ENCODE measurements at regions of chr3 and their contacts with region 1.

Region 1: GRCh38 chr3:33372218-33373081 is 67.8 kb downstream of the UBP1 start:
- DNase-seq: peak; percentile 12 to 42 (median 41)
- H3K4me3 ChIP-seq: peak overlapping the region in 1 of 3 experiments; percentile 13
- H3K4me3 Mint-ChIP-seq: peak overlapping the region in 1 of 2 donors; percentile 14
- H3K27ac ChIP-seq: no peak overlapping the region
- H3K27ac Mint-ChIP-seq: peak overlapping the region in 3 of 7 donors; percentile 28 to 48 (median 42)
- H3K4me1 ChIP-seq: no peaks in the 10 kb centered on the region
- H3K4me1 Mint-ChIP-seq: peaks cover 5% of the 10 kb centered on the region
- H3K27me3 ChIP-seq: no peaks in the 10 kb centered on the region
- H3K27me3 Mint-ChIP-seq: peaks cover 0 to 4% (median 2%) of the 10 kb centered on the region in 3 donors
- CTCF ChIP-seq: peak; percentile 96

Region 2: DNA sequence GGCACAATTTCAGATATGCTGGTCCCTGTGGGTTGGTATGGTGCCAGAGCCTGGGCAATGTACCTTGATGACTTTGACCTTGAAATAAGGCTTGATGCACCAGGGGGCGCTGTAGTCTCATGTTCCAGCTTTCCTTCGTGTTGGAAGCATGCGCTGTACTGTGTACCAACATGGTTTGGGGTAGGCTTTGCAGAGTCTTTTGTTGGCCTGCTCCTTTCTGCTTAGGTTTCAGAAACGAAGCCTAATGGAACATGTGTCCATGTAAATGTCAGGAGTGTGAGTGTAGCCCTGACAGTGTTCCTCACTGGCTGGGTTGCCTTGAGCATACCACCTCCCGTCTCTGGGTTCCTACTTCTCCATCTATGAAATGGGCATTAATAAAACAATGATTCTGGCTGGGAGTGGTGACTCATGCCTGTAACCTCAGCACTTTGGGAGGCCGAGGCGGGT is 424.6 kb before region 1 on chr3:
- intact Hi-C with region 1: loop called in 1 of 2 experiments (anchors 2 kb)
- DNase-seq: peak; percentile 60 to 72 (median 67)
- H3K4me3 ChIP-seq: no peak overlapping the region
- H3K4me3 Mint-ChIP-seq: no peak overlapping the region
- H3K27ac ChIP-seq: no peak overlapping the region
- H3K27ac Mint-ChIP-seq: peak overlapping the region in 1 of 7 donors; percentile 50
- H3K4me1 ChIP-seq: no peaks in the 10 kb centered on the region
- H3K4me1 Mint-ChIP-seq: peaks cover 11% of the 10 kb centered on the region
- H3K27me3 ChIP-seq: no peaks in the 10 kb centered on the region
- H3K27me3 Mint-ChIP-seq: no peaks in the 10 kb centered on the region
- CTCF ChIP-seq: peak; percentile 89

Region 3: GRCh38 chr3:33131331-33132018 is 241.0 kb before region 1 on chr3:
- intact Hi-C with region 1: loop called (anchors 5 kb)
- DNase-seq: peak; percentile 21 to 64 (median 41)
- H3K4me3 ChIP-seq: no peak overlapping the region
- H3K4me3 Mint-ChIP-seq: no peak overlapping the region
- H3K27ac ChIP-seq: peak overlapping the region in 1 of 2 donors; percentile 51
- H3K27ac Mint-ChIP-seq: no peak overlapping the region
- H3K4me1 ChIP-seq: no peaks in the 10 kb centered on the region
- H3K4me1 Mint-ChIP-seq: no peaks in the 10 kb centered on the region
- H3K27me3 ChIP-seq: no peaks in the 10 kb centered on the region
- H3K27me3 Mint-ChIP-seq: no peaks in the 10 kb centered on the region
- CTCF ChIP-seq: peak; percentile 89